Dorsolateral prefrontal cortex (tissue), 120 donors: ENCODE measurements at regions of chr14 and their contacts with region 1.

Region 1: DNA sequence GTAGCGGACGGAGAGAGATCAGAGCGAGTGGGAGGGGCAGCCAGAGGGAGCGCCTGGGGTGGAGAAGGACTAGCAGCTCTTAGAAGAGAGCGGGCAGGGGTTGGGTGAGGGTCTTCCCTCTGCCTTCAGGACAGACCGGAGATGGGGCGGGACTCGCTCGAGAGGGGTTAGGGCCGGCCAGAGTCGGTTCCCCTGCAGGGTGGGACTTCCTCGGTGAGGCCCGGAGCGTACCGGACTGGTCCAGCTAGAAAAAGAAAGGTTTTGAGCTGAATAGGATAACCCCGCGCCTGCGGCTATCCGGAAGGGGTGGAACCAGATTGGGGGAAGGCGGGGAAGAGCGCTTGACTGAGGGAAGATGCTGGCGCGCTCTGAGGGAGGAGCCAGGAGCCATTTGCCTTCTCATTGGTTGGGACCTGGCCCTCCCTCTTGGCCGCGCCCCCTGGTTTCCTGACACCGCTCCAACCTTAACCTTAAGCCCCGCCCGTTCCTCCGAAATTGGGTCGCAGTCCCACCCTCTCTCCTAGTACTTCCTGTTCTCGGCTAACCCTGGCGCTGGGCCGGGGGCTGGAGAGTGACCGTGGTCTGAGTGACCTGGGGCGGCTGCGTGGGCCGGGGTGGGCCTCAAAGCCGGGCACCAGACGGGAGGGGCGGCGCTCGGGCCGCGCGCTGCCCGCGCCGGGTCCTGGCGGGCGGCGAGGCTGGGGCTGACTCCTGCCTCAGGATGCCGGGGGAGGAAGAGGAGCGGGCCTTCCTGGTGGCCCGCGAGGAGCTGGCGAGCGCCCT is at the start of gene RNF31:
- DNase-seq: peak; percentile 92 to 98 (median 97)
- H3K4me3 ChIP-seq: peak within 1 kb of the TSS; percentile 53 to 98 (median 92)
- H3K27ac ChIP-seq: peak within 1 kb of the TSS; percentile 68 to 99 (median 94)
- H3K27me3 ChIP-seq: no peaks in the 10 kb centered on the region
- CTCF ChIP-seq: peak in 33 of 56 donors; percentile 0 to 56 (median 33)
- total RNA-seq, gene RNF31: 30.4 to 89.6 (median 50.6) TPM

Region 2: GRCh38 chr14:24114536-24115450 is 32.4 kb before region 1 on chr14 and contains the starts of genes DCAF11 and NRL:
- intact Hi-C with region 1: loop called in 1 of 2 experiments (anchors 2 kb)
- DNase-seq: peak; percentile 95 to 99 (median 98)
- H3K4me3 ChIP-seq: peak within 1 kb of the TSS; percentile 53 to 100 (median 85)
- H3K27ac ChIP-seq: peak within 1 kb of the TSS; percentile 93 to 100 (median 99)
- H3K27me3 ChIP-seq: no peaks in the 10 kb centered on the region
- CTCF ChIP-seq: peak in 15 of 56 donors; percentile 1 to 65 (median 17)
- total RNA-seq, gene DCAF11: 58.6 to 104 (median 77.7) TPM
- total RNA-seq, gene NRL: 1.7 to 6.4 (median 3.6) TPM

Region 3: DNA sequence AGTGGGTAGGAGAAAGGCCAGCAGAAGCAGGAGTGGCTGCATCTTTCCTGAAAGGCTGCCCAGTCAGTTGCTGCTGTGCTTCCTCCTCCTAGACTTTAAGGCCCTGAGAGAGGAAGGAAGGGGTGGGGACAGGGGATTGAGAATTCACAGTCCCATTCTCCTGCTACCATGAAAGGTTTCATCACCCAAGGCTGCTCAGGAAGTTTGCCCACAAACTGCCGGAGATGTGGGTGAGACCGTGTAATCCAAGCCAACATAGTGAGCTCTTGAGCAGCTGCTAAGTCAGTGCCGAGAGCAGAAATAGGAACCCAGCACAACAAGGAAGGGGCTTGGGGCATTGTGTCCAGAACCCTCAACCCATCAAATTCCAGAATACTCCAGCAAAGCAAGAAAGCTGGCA is 429.0 kb after region 1 on chr14 and contains the start of gene CTSG:
- intact Hi-C with region 1: no loop called
- DNase-seq: no peak
- H3K4me3 ChIP-seq: no peak within 1 kb of the TSS
- H3K27ac ChIP-seq: no peak within 1 kb of the TSS
- H3K27me3 ChIP-seq: peaks cover 0 to 7% (median 0%) of the 10 kb centered on the region in 45 donors
- CTCF ChIP-seq: no peak
- total RNA-seq, gene CTSG: 1.0 to 2.3 TPM in 2 of 120 experiments, not detected in the others